Activated T-helper 2 cell treated with anti-CD3 and anti-CD28 coated beads, Interferon-gamma antibody, Interleukin-2, Interleukin-4, amounts not matched to agents 10 μg/mL and 5 μg/mL and 100 μg/mL, durations not matched to agents 14 hours and 24 hours and 36 hours (primary cell): ENCODE measurements at regions of chr9 and their contacts with region 1.

Region 1: GRCh38 chr9:33167046-33167808 is at the start of gene B4GALT1:
- DNase-seq: peak; percentile 90
- H3K4me3 Mint-ChIP-seq: peak within 1 kb of the TSS; percentile 94
- H3K27ac Mint-ChIP-seq: peak within 1 kb of the TSS; percentile 96
- H3K4me1 Mint-ChIP-seq: peaks cover 57% of the 10 kb centered on the region
- H3K27me3 Mint-ChIP-seq: no peaks in the 10 kb centered on the region
- total RNA-seq, gene B4GALT1: 60.6 and 64.0 TPM in 2 replicates

Region 2: GRCh38 chr9:32384364-32385151 is 782.7 kb before region 1 on chr9 and contains the start of gene ACO1:
- intact Hi-C with region 1: loop called (anchors 10 kb)
- DNase-seq: peak; percentile 82
- H3K4me3 Mint-ChIP-seq: peak within 1 kb of the TSS; percentile 80
- H3K27ac Mint-ChIP-seq: peak within 1 kb of the TSS; percentile 18
- H3K4me1 Mint-ChIP-seq: peaks cover 19% of the 10 kb centered on the region
- H3K27me3 Mint-ChIP-seq: peaks cover 28% of the 10 kb centered on the region
- total RNA-seq, gene ACO1: 11.1 and 11.8 TPM in 2 replicates

Region 3: GRCh38 chr9:33076358-33077004 is 90.7 kb before region 1 on chr9 and contains the start of gene SMU1:
- intact Hi-C with region 1: loop called (anchors 1 kb)
- DNase-seq: peak; percentile 96
- H3K4me3 Mint-ChIP-seq: peak within 1 kb of the TSS; percentile 99
- H3K27ac Mint-ChIP-seq: peak within 1 kb of the TSS; percentile 99
- H3K4me1 Mint-ChIP-seq: peaks cover 28% of the 10 kb centered on the region
- H3K27me3 Mint-ChIP-seq: no peaks in the 10 kb centered on the region
- total RNA-seq, gene SMU1: 27.6 and 28.3 TPM in 2 replicates

Region 4: DNA sequence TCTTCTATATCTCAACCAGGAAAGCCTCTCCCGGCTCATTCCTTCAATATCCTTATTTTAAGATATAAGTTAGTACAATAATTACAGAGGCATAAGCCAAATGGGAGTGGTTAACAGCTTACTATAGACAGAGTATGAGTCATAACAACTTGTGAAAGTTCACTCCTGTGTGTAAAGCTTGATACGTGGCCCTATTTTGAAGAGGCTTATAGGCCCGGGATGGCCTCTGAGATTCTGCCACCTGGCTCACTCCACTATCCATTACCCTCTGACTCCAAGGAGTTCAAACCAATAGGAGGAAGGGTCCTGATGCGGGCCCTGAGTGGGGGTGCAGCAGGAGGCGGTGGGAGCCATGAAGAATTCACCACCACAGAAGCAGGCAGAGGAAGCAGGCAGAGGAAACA is 36.7 kb before region 1 on chr9:
- intact Hi-C with region 1: loop called (anchors 2 kb)
- DNase-seq: no peak
- H3K4me3 Mint-ChIP-seq: no peak overlapping the region
- H3K27ac Mint-ChIP-seq: peak overlapping the region; percentile 94
- H3K4me1 Mint-ChIP-seq: peaks cover 24% of the 10 kb centered on the region
- H3K27me3 Mint-ChIP-seq: no peaks in the 10 kb centered on the region

Region 5: GRCh38 chr9:33202552-33203201 is 35.5 kb after region 1 on chr9:
- intact Hi-C with region 1: loop called (anchors 5 kb)
- DNase-seq: peak; percentile 27
- H3K4me3 Mint-ChIP-seq: no peak overlapping the region
- H3K27ac Mint-ChIP-seq: peak overlapping the region; percentile 16
- H3K4me1 Mint-ChIP-seq: peaks cover 12% of the 10 kb centered on the region
- H3K27me3 Mint-ChIP-seq: peaks cover 11% of the 10 kb centered on the region

Region 6: DNA sequence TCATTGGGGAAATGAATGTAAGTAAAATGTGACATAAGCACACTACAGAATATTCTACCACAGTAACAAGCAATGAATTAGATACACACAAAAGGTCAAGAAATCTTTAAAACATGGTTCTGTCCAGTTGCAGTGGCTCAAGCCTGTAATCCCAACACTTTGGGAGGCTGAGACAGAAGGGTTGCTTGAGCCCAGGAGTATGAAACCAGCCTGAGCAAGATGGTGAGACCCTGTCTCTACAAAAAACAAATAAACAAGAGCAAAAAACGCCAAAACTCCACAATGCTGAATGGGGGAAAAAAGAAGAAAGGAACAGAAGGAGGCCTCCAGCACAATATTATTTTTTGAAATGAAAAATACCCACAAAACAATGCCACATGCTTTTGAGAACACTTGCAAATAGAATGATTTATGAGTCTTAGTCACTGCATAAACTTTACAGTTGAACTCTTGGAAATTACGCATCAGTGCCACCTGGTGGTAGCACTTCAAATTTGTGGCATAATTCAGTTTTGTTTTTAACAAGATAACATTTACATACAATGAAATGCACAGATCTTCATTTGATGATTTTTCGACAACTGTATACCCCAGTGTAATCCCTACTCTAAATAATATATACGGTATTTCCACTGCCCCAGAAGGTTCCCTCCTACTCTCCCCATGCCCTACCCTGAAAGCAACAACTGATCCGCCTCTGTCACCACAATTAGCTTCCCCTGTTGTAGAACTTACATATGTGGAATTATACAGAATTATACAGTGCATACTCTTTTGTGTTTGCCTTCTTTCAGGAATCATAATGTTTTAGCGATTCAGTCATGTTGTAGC is 58.3 kb after region 1 on chr9:
- intact Hi-C with region 1: loop called (anchors 5 kb)
- DNase-seq: peak; percentile 50
- H3K4me3 Mint-ChIP-seq: no peak overlapping the region
- H3K27ac Mint-ChIP-seq: peak overlapping the region; percentile 2
- H3K4me1 Mint-ChIP-seq: peaks cover 33% of the 10 kb centered on the region
- H3K27me3 Mint-ChIP-seq: no peaks in the 10 kb centered on the region

Region 7: DNA sequence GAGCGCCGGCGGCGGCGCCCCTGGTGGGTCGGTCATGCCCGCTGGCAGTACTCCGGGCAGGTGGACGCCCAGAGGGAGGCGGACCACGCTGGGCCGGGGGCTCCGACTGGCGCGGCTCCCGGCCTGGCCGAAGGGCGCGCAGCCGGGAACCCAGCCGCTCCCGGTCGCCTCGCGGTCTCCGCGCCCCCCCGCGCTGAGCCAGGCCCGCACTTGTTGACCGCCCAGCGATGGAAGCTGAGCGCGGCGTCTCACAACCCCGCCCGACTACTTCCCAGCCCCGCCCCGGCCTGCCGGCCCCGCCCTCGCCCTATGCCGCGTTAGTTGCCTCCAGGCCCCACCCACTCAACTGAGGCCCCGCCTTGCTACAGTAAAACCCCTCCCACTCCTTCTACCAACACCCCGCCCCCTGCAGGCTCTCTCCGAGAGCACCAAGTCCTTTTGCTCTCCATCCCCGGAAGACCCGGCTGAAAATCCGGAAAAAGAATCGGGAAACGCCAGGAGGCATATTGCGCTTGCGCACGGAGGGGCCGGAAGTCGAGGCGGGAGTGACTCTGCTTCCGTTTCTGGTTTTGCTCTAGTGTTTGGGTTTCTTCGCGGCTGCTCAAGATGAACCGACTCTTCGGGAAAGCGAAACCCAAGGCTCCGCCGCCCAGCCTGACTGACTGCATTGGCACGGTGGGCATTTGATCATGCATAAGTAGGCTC is 97.4 kb after region 1 on chr9 and contains the starts of genes BAG1 and CHMP5:
- intact Hi-C with region 1: loop called (anchors 1 kb)
- DNase-seq: peak; percentile 100
- H3K4me3 Mint-ChIP-seq: peak within 1 kb of the TSS; percentile 98
- H3K27ac Mint-ChIP-seq: peak within 1 kb of the TSS; percentile 96
- H3K4me1 Mint-ChIP-seq: peaks cover 43% of the 10 kb centered on the region
- H3K27me3 Mint-ChIP-seq: no peaks in the 10 kb centered on the region
- total RNA-seq, gene BAG1: 62.0 and 68.9 TPM in 2 replicates
- total RNA-seq, gene CHMP5: 54.5 and 57.6 TPM in 2 replicates

Region 8: DNA sequence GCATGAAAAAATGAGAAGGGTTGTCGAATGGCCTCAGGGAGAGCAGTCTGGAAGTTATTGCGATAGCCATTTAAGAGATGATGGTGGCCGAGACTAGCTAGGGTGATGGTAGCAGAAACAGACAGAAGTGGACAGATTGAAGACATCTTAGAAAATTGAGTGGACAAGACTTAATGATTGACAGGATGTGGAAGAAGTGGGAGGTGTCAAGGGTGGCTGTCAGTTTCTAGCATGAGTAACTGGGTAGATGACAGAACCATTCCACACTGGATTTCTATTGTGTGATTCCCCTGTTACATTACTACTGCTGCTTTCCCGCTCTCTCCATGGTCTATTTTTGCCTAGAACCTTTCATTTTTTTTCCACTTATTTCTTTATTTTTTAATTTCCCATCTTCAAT is 110.3 kb after region 1 on chr9:
- intact Hi-C with region 1: no loop called
- DNase-seq: no peak
- H3K4me3 Mint-ChIP-seq: no peak overlapping the region
- H3K27ac Mint-ChIP-seq: no peak overlapping the region
- H3K4me1 Mint-ChIP-seq: peaks cover 3% of the 10 kb centered on the region
- H3K27me3 Mint-ChIP-seq: no peaks in the 10 kb centered on the region